H1 (cell line): ENCODE measurements at regions of chr1 and their contacts with region 1.

Region 1: DNA sequence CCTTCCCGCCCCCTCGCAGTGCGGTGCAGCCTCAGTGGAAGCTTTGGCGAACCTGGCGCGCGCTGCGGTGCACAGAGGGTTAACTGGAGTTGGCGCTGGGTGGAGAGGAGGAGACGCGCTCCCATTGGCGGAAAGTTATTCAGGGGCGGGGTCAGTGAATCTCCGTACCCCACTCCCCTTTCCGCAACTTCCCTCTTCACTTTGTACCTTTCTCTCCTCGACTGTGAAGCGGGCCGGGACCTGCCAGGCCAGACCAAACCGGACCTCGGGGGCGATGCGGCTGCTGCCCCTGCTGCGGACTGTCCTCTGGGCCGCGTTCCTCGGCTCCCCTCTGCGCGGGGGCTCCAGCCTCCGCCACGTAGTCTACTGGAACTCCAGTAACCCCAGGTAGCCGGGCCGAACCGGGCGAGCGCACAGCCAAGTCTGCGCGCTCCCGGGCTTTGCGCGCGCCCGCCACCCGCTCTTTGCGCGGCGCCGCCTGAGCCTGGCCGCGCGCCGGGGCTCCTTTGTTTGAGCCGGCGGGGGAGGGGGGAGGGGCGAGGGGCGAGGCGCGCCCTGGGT is at the start of gene EFNA4:
- DNase-seq: peak in 1 of 2 experiments; percentile 94
- H3K4me3 ChIP-seq: peak within 1 kb of the TSS; percentile 63 to 85 (median 82)
- H3K27ac ChIP-seq: peak within 1 kb of the TSS; percentile 77; the same call in 1 of the 2 replicates
- H3K4me1 ChIP-seq: peaks cover 0 to 19% (median 6%) of the 10 kb centered on the region in 4 experiments; a peak in 5 of 7 replicates
- H3K27me3 ChIP-seq: peaks cover 0 to 4% (median 1%) of the 10 kb centered on the region in 4 experiments; a peak in 2 of 7 replicates
- CTCF ChIP-seq: no peak
- EP300 ChIP-seq: no peak
- POLR2A ChIP-seq: peak in 1 of 2 experiments; percentile 78; a peak in 2 of 3 replicates
- RAD21 ChIP-seq: no peak
- total RNA-seq, gene EFNA4: 18.5 and 21.9 TPM in 2 replicates

Region 2: GRCh38 chr1:154992721-154993571 is 70.7 kb before region 1 on chr1:
- CTCF ChIA-PET with region 1: interaction called, 112 read pairs
- POLR2A ChIA-PET with region 1: interaction called, 21 read pairs
- DNase-seq: peak in 1 of 2 experiments; percentile 58
- H3K4me3 ChIP-seq: no peak overlapping the region
- H3K27ac ChIP-seq: peak overlapping the region; percentile 58; the same call in 1 of the 2 replicates
- H3K4me1 ChIP-seq: peaks cover 0 to 7% (median 3%) of the 10 kb centered on the region in 4 experiments; a peak in 3 of 7 replicates
- H3K27me3 ChIP-seq: no peaks in the 10 kb centered on the region
- CTCF ChIP-seq: peak; percentile 45 to 51 (median 48)
- EP300 ChIP-seq: no peak
- POLR2A ChIP-seq: peak; percentile 51 to 61
- RAD21 ChIP-seq: peak; percentile 12 to 33; a peak in 2 of 4 replicates

Region 3: GRCh38 chr1:155017041-155017945 is 46.3 kb before region 1 on chr1:
- CTCF ChIA-PET with region 1: interaction called, 130 read pairs
- POLR2A ChIA-PET with region 1: interaction called, 5 read pairs
- DNase-seq: peak; percentile 89 to 92
- H3K4me3 ChIP-seq: peak overlapping the region; percentile 21 to 60 (median 39); a peak in 7 of 8 replicates
- H3K27ac ChIP-seq: peak overlapping the region; percentile 71; the same call in 1 of the 2 replicates
- H3K4me1 ChIP-seq: peaks cover 8 to 23% (median 16%) of the 10 kb centered on the region in 4 experiments
- H3K27me3 ChIP-seq: peaks cover 0 to 2% (median 0%) of the 10 kb centered on the region in 4 experiments; a peak in 1 of 7 replicates
- CTCF ChIP-seq: peak in 2 of 3 experiments; percentile 99 to 100; a peak in 3 of 4 replicates
- EP300 ChIP-seq: peak in 1 of 2 experiments; percentile 78; a peak in 2 of 3 replicates
- POLR2A ChIP-seq: peak in 1 of 2 experiments; percentile 20; a peak in 1 of 3 replicates
- RAD21 ChIP-seq: peak; percentile 65 to 72

Region 4: DNA sequence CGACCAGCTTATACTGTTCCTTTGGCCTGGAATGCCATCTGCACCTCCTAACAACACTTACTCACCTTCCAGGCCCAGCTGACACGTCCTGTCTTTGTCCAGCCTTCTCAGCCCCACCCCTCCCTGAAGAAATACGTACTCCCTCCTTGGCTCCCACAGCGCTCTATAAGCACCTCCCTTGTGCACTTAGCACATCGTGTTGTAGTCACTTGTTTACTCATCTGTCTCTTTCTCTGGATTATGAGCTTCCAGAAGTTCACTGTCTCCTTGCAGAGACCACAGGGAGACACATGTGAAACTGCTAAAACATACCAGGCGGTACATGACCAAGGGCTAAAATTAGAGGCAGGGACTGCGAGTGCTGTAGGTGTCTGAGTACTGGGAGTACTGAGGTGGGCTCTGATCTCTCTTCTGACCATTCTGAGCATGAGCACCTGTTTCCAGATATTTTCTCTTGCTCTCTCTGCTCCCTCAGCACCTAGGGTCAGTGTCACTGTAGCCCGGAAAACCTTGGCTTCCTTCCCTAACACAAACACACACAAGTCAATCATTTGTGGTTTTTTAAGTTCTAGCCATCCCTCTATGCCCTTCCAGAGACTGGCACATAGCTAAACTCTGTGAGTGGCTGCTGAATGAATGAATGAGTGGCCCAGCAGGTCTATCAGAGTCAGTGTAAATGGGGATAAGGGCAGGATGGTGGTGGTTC is 24.9 kb before region 1 on chr1:
- CTCF ChIA-PET with region 1: interaction called, 907 read pairs
- POLR2A ChIA-PET with region 1: interaction called, 4 read pairs
- DNase-seq: no peak
- H3K4me3 ChIP-seq: no peak overlapping the region
- H3K27ac ChIP-seq: no peak overlapping the region
- H3K4me1 ChIP-seq: no peaks in the 10 kb centered on the region
- H3K27me3 ChIP-seq: peaks cover 0 to 2% (median 0%) of the 10 kb centered on the region in 4 experiments; a peak in 3 of 7 replicates
- CTCF ChIP-seq: no peak
- EP300 ChIP-seq: no peak
- POLR2A ChIP-seq: no peak
- RAD21 ChIP-seq: no peak

Region 5: DNA sequence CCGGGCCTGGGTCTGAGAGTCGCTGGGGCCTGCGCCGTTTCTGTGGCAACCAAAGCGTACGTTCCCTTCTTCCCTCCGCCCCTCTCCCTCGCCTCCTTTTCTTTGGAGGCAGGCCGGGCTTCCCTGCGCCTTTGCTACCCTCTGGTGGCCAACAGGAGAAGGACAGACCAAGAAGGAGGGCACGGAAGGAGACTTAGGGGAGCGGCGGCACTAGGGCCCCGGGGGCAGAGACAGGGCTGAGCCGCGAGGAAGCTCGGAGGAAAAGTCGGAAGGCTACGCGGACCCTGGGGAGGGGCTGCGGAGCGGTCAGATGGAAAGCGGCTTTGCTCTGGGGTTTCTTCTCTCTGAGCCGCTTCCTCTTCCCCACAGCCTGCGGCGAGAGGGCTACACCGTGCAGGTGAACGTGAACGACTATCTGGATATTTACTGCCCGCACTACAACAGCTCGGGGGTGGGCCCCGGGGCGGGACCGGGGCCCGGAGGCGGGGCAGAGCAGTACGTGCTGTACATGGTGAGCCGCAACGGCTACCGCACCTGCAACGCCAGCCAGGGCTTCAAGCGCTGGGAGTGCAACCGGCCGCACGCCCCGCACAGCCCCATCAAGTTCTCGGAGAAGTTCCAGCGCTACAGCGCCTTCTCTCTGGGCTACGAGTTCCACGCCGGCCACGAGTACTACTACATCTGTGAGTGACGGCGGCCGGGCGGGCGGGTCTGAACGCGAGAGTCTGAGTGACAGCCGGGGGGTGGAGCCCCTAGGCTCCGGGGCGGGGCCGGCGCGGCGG is 21.3 kb after region 1 on chr1:
- CTCF ChIA-PET with region 1: interaction called, 907 read pairs
- POLR2A ChIA-PET with region 1: interaction called, 21 read pairs
- DNase-seq: peak; percentile 89 to 96
- H3K4me3 ChIP-seq: peak overlapping the region; percentile 59 to 81 (median 77)
- H3K27ac ChIP-seq: no peak overlapping the region
- H3K4me1 ChIP-seq: peaks cover 0 to 45% (median 23%) of the 10 kb centered on the region in 4 experiments; a peak in 6 of 7 replicates
- H3K27me3 ChIP-seq: peaks cover 36 to 46% (median 40%) of the 10 kb centered on the region in 4 experiments
- CTCF ChIP-seq: peak in 2 of 3 experiments; percentile 96 to 97; a peak in 3 of 4 replicates
- EP300 ChIP-seq: peak in 1 of 2 experiments; percentile 76; a peak in 1 of 3 replicates
- POLR2A ChIP-seq: 0 out of 3 replicates have a peak, but pooled peaks of 1 of the 2 experiments have one; percentile 18
- RAD21 ChIP-seq: peak; percentile 98 to 99

Region 6: DNA sequence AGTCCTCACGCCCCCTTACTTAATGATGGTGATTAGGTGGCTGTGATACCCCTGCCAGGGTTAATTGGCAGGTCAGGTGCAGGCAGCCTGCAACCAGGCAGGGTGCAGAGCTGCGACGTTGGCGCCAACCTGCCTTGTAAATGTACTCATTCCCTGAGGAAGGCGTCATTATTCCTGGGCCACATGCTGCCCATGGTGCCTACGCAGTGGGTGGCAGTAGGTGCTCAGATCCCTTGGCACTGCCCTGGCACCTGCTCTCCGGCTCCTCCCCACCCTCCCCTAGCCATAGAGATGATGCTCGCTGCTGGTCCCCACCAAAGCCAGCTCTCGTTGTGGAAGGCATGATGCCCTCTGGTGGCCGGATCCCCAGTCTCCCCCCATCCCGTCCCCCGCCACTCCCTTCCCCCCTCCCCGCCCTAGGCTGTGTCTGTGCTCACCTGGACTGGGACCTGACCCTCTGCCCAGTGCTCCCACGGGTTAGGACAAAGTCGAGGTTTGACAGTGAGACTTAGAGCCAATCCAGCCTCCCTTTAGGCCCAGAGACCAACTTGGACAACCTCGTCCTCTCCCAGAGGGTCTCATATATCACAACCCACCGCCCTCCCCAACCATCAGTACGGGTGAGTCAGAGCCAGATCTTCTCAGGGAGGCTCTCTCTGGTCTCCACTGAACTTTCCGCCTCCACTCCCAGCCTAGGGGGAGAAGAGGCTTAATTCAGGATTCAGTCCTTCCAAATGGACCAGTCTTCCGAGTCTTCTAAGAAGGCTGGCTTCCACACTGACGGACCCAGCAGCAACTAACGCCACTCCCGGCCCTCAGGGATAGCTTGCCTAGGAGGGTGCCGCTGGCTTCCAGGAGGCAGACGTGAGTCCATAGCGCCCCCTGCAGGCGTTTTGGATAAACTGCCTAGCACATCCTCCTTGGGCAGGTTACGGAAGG is 103.8 kb after region 1 on chr1:
- CTCF ChIA-PET with region 1: interaction called, 14 read pairs
- POLR2A ChIA-PET with region 1: interaction called, 4 read pairs
- DNase-seq: peak in 1 of 2 experiments; percentile 96
- H3K4me3 ChIP-seq: peak overlapping the region; percentile 30 to 75 (median 72); a peak in 7 of 8 replicates
- H3K27ac ChIP-seq: no peak overlapping the region
- H3K4me1 ChIP-seq: peaks cover 5 to 19% (median 13%) of the 10 kb centered on the region in 4 experiments
- H3K27me3 ChIP-seq: no peaks in the 10 kb centered on the region
- CTCF ChIP-seq: peak in 2 of 3 experiments; percentile 98 to 99; a peak in 3 of 4 replicates
- EP300 ChIP-seq: no peak
- POLR2A ChIP-seq: no peak
- RAD21 ChIP-seq: peak; percentile 96 to 98